ENCODE measurements at regions of chr5 and their contacts with region 1.

Region 1: DNA sequence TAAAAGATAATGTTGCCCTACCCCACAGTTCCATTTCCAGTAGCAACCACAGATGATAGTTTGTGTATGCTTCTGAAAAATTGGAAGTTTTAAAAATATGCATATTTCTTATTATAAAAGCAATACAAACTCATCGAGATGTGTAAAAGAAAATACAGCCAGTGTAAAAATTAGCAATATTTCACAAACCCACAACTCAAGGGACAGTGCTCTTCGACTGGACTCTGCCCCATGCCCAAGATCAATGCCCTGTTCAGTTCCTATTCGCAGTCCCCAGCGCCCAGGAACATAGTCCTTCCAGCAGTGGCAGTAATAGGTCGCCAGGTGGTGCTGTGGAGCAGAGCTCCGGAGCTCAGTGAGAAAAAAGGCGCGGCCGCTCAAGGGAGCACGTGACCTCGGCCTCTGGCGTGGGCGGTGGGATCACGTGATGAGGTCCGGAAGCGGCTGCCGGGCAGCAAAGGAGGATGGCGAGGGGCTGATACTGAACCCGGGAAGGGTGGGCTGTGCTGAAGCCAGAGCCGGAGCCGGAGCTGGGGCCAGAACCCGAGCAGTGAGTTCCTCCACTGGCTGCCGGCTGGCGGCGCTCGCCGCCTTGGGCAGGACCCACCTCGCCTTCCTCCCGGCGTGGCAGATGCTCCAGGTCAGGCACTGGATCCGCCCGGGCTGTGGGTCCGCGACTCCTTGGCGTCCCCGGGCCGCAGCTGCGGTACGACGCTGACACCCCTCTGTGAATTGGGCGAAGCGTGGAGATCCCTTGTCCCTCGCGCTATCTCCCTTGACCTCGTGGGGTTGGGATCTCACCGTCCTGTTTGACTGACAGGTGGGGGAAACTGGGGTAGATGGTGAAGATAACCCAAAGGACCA is at the start of gene SLC36A1:
- DNase-seq: peak; percentile 95
- ATAC-seq: peak; percentile 94
- H3K4me3 Mint-ChIP-seq: peak within 1 kb of the TSS; percentile 94
- H3K27ac Mint-ChIP-seq: peak within 1 kb of the TSS; percentile 90
- H3K4me1 Mint-ChIP-seq: peaks cover 20% of the 10 kb centered on the region
- H3K27me3 Mint-ChIP-seq: peaks cover 29% of the 10 kb centered on the region
- total RNA-seq, gene SLC36A1: 6.6 to 7.7 TPM

Region 2: GRCh38 chr5:151432210-151432609 is 15.2 kb before region 1 on chr5:
- CTCF ChIA-PET with region 1: interaction called, 11 read pairs
- POLR2A ChIA-PET with region 1: interaction called, 3 read pairs
- DNase-seq: peak; percentile 15
- ATAC-seq: no peak
- H3K4me3 Mint-ChIP-seq: no peak overlapping the region
- H3K27ac Mint-ChIP-seq: no peak overlapping the region
- H3K4me1 Mint-ChIP-seq: no peaks in the 10 kb centered on the region
- H3K27me3 Mint-ChIP-seq: peaks cover 13% of the 10 kb centered on the region

Region 3: DNA sequence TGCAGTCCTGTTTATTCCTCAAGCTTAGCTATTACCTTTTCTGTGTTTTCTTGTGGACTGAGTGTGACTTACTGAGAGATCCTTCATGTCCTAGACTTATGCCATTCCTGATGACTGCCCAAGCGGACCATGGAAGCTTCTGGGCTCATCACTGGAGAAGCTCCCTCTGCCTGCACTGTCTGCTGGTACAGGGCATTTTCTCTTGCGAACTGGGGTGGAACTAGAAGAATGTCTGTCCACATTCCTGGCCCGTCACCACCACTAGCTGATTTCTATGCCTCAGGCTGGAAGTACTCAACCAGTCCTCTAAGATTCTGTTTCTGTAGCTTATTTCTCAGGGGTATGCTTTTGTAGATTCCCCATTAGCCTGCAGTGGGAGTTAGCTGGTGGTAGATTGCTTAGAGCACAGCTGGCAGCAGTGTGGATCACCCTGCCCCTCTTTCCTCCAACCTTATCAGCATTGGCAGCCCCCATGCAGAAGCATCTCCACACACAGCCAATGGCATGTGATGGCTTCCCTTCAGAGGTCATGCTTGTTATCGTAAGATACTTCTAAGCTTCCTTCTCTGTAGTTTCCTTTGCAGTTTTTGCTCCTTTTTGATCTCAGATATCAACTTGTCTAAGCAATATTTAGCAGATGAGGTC is 12.4 kb after region 1 on chr5:
- CTCF ChIA-PET with region 1: interaction called, 34 read pairs
- POLR2A ChIA-PET with region 1: interaction called, 3 read pairs
- DNase-seq: no peak
- ATAC-seq: no peak
- H3K4me3 Mint-ChIP-seq: no peak overlapping the region
- H3K27ac Mint-ChIP-seq: no peak overlapping the region
- H3K4me1 Mint-ChIP-seq: no peaks in the 10 kb centered on the region
- H3K27me3 Mint-ChIP-seq: no peaks in the 10 kb centered on the region

Region 4: DNA sequence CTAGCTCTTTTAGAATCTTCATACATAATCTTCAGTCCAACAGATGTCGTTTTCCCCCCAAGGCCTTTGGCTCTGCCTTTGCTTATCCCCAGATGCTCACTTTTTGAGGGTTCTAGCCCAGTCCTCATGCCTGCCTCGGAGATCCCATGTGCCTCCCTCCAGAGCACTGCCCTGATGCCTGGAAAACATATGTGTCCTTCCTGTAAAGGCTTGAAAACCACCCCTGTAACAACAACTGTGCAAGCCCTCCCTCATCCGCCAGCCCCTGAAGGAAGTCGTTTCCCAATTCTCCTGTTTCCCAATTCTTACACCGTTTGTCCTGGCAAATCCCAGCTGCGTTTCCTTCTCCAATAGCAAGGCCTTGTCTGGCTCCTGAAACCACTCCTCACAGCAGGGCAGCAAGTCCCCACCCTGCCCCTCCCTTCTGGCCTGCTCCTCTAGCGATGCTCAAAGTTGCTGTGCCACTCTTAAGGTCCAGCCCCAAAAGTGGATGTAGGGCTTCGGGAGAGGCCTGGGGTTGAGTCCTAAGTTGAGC is 52.2 kb after region 1 on chr5:
- CTCF ChIA-PET with region 1: interaction called, 27 read pairs
- POLR2A ChIA-PET with region 1: interaction called, 3 read pairs
- DNase-seq: no peak
- ATAC-seq: no peak
- H3K4me3 Mint-ChIP-seq: no peak overlapping the region
- H3K27ac Mint-ChIP-seq: no peak overlapping the region
- H3K4me1 Mint-ChIP-seq: peaks cover 5% of the 10 kb centered on the region
- H3K27me3 Mint-ChIP-seq: no peaks in the 10 kb centered on the region

Region 5: GRCh38 chr5:151523335-151523734 is 75.9 kb after region 1 on chr5:
- CTCF ChIA-PET with region 1: interaction called, 32 read pairs
- POLR2A ChIA-PET with region 1: no interaction called
- DNase-seq: peak; percentile 55
- ATAC-seq: peak; percentile 88
- H3K4me3 Mint-ChIP-seq: no peak overlapping the region
- H3K27ac Mint-ChIP-seq: no peak overlapping the region
- H3K4me1 Mint-ChIP-seq: no peaks in the 10 kb centered on the region
- H3K27me3 Mint-ChIP-seq: no peaks in the 10 kb centered on the region

Region 6: GRCh38 chr5:151651997-151652645 is 204.7 kb after region 1 on chr5:
- CTCF ChIA-PET with region 1: interaction called, 58 read pairs
- POLR2A ChIA-PET with region 1: interaction called, 4 read pairs
- DNase-seq: peak; percentile 77
- ATAC-seq: peak; percentile 96
- H3K4me3 Mint-ChIP-seq: no peak overlapping the region
- H3K27ac Mint-ChIP-seq: no peak overlapping the region
- H3K4me1 Mint-ChIP-seq: no peaks in the 10 kb centered on the region
- H3K27me3 Mint-ChIP-seq: peaks cover 8% of the 10 kb centered on the region

Region 7: DNA sequence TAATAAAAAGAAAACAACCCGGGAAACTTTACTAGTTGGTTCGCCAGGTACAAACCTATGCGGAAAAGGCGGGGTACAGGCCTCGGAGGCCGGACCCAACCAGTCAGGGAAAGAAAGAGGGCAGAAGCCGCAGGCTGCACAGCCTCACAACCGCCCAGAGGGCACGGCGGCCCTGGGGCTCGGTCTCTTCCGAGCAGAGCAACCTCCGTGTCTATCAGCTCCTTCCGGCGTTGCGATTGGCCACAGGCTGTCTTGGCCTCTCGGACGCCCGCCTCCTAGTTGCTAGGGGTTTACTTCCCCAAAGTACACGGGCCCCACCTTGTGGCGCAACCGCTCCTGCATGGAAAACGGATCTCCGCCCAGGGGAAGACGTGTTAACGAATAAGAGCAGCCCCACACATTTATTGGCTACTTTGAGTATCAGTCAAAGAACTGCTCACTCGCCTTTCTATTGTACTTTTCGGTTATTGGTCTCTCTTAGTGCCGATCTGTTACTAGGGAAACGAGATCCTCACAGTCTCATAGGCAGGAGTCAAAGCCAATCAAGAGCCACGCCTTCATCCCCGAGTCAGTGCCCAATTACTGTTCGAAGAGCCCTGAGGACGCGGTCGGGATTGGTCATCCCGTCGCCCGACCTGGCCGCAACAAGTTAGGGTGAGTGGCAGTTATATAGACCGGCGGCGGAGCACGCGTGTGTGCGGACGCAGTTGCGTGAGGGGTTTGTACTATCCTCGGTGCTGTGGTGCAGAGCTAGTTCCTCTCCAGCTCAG is 324.0 kb after region 1 on chr5 and contains the start of gene G3BP1:
- CTCF ChIA-PET with region 1: interaction called, 14 read pairs
- POLR2A ChIA-PET with region 1: interaction called, 4 read pairs
- DNase-seq: peak; percentile 100
- ATAC-seq: peak; percentile 84
- H3K4me3 Mint-ChIP-seq: peak within 1 kb of the TSS; percentile 87
- H3K27ac Mint-ChIP-seq: peak within 1 kb of the TSS; percentile 81
- H3K4me1 Mint-ChIP-seq: peaks cover 33% of the 10 kb centered on the region
- H3K27me3 Mint-ChIP-seq: no peaks in the 10 kb centered on the region
- total RNA-seq, gene G3BP1: 193 to 213 TPM